Activated CD4-positive, alpha-beta memory T cell treated with anti-CD3 and anti-CD28 coated beads for 36 hours (primary cell): ENCODE measurements at regions of chr12 and their contacts with region 1.

Region 1: DNA sequence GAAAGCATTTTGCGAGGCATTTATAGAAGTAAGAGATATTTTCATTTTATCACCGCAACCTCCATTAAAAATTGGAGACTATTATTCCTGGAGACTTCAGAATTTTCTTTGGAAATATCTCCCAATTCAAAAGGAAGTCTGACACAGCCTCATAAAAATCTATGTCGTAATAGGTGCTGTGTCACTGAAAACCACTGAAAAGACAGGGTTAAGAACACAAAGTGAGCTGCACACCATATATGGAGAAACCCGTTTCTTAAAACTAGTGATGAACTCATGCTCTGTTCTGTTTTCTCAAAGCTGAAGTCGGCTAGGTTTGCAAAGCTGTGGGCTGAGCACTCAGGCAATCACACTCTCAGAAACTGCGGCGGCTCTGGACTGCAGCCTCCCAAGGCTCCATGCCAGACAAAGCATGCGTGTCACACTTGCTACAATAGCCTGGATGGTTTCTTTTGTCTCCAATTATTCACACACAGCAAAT is at the start of gene GLIPR1:
- DNase-seq: peak; percentile 86
- H3K4me3 Mint-ChIP-seq: peak within 1 kb of the TSS; percentile 89
- H3K27ac Mint-ChIP-seq: peak within 1 kb of the TSS; percentile 88
- H3K4me1 Mint-ChIP-seq: peaks cover 85% of the 10 kb centered on the region
- H3K27me3 Mint-ChIP-seq: peaks cover 1% of the 10 kb centered on the region
- total RNA-seq, gene GLIPR1: 5.8 to 6.8 TPM

Region 2: GRCh38 chr12:75334384-75335030 is 146.0 kb before region 1 on chr12 and contains the start of gene GLIPR1L1:
- CTCF ChIA-PET with region 1: interaction called, 25 read pairs
- POLR2A ChIA-PET with region 1: interaction called, 3 read pairs
- intact Hi-C with region 1: loop called (anchors 2 kb)
- DNase-seq: peak; percentile 88
- H3K4me3 Mint-ChIP-seq: peak within 1 kb of the TSS; percentile 59
- H3K27ac Mint-ChIP-seq: no peak within 1 kb of the TSS
- H3K4me1 Mint-ChIP-seq: peaks cover 22% of the 10 kb centered on the region
- H3K27me3 Mint-ChIP-seq: peaks cover 16% of the 10 kb centered on the region
- total RNA-seq, gene GLIPR1L1: not detected

Region 3: DNA sequence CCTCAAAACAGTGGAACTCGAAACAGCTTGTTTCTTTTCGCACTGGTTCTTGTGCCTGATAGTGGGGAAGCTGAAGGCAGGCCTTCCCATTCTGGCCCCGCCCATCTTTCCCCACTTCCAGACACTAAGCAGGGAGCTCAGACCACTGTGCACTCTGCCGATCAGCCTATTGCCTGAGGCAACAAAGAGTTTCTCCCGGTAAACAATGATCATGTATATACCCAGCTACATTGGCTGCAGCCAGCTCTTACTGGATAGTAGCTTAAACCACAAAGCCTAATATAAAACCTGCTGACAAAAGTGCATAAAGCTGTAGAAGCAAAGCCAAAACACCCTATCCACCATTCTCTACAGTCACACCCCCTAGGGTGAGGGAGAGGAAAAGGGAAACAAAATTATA is 24.7 kb before region 1 on chr12:
- CTCF ChIA-PET with region 1: interaction called, 3 read pairs
- POLR2A ChIA-PET with region 1: no interaction called
- intact Hi-C with region 1: loop called (anchors 2 kb)
- DNase-seq: no peak
- H3K4me3 Mint-ChIP-seq: no peak overlapping the region
- H3K27ac Mint-ChIP-seq: no peak overlapping the region
- H3K4me1 Mint-ChIP-seq: peaks cover 36% of the 10 kb centered on the region
- H3K27me3 Mint-ChIP-seq: no peaks in the 10 kb centered on the region

Region 4: DNA sequence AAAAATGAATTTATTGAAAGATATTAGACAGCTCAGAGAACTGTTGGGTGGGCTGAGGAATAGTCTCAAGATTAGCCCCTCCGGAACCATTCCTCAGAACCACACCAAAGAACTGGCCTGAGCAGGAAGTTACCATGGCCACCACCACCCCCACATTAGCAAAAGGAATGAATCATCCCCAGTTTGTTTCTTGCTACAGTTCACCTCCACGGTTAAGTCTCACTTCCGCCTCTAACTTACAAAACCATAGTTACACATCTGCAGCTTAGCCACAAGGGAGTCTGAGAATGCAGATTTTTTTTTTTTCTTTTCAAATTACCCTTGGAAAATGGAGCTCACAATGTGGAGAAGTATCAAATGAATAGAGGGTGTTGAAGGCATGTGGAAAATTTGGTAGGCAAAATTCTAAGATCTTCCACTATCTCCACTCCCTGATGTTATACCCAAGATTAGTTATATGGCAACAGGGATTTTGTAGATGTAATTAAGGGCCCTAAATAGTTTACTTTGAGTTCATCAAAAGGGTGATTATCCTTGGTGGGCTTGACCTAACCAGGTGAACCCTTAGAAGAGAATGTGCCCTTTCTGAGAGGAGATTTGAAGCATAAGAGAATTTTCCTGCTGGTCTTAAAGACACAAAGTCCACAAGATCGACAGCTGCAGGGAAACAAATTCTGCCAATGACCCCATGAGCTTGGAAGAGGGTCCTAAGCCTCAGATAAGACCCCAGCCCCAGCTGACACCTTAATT is 160.7 kb after region 1 on chr12:
- CTCF ChIA-PET with region 1: interaction called, 3 read pairs
- POLR2A ChIA-PET with region 1: no interaction called
- intact Hi-C with region 1: loop called (anchors 5 kb)
- DNase-seq: peak; percentile 67
- H3K4me3 Mint-ChIP-seq: no peak overlapping the region
- H3K27ac Mint-ChIP-seq: no peak overlapping the region
- H3K4me1 Mint-ChIP-seq: peaks cover 31% of the 10 kb centered on the region
- H3K27me3 Mint-ChIP-seq: peaks cover 3% of the 10 kb centered on the region

Region 5: GRCh38 chr12:75944097-75944904 is 463.8 kb after region 1 on chr12:
- CTCF ChIA-PET with region 1: no interaction called
- POLR2A ChIA-PET with region 1: no interaction called
- intact Hi-C with region 1: loop called (anchors 1 kb)
- DNase-seq: peak; percentile 42
- H3K4me3 Mint-ChIP-seq: peak overlapping the region; percentile 34
- H3K27ac Mint-ChIP-seq: peak overlapping the region; percentile 95
- H3K4me1 Mint-ChIP-seq: peaks cover 29% of the 10 kb centered on the region
- H3K27me3 Mint-ChIP-seq: no peaks in the 10 kb centered on the region

Region 6: GRCh38 chr12:76037130-76038103 is 556.9 kb after region 1 on chr12:
- CTCF ChIA-PET with region 1: interaction called, 14 read pairs
- POLR2A ChIA-PET with region 1: interaction called, 10 read pairs
- intact Hi-C with region 1: no loop called
- DNase-seq: no peak
- H3K4me3 Mint-ChIP-seq: no peak overlapping the region
- H3K27ac Mint-ChIP-seq: no peak overlapping the region
- H3K4me1 Mint-ChIP-seq: peaks cover 19% of the 10 kb centered on the region
- H3K27me3 Mint-ChIP-seq: no peaks in the 10 kb centered on the region

Region 7: GRCh38 chr12:76559400-76560085 is 1079.0 kb after region 1 on chr12 and contains the start of gene OSBPL8:
- CTCF ChIA-PET with region 1: no interaction called
- POLR2A ChIA-PET with region 1: no interaction called
- intact Hi-C with region 1: loop called (anchors 2 kb)
- DNase-seq: peak; percentile 98
- H3K4me3 Mint-ChIP-seq: peak within 1 kb of the TSS; percentile 88
- H3K27ac Mint-ChIP-seq: peak within 1 kb of the TSS; percentile 97
- H3K4me1 Mint-ChIP-seq: peaks cover 34% of the 10 kb centered on the region
- H3K27me3 Mint-ChIP-seq: no peaks in the 10 kb centered on the region
- total RNA-seq, gene OSBPL8: 69.8 to 73.7 TPM